ENCODE measurements at regions of chr10 and their contacts with region 1.

Region 1: GRCh38 chr10:94439275-94439861 is 37.0 kb downstream of the TBC1D12 start:
- DNase-seq: no peak
- H3K4me3 Mint-ChIP-seq: no peak overlapping the region
- H3K27ac Mint-ChIP-seq: no peak overlapping the region
- H3K4me1 Mint-ChIP-seq: no peaks in the 10 kb centered on the region
- H3K27me3 Mint-ChIP-seq: peaks cover 8% of the 10 kb centered on the region

Region 2: GRCh38 chr10:94279835-94280709 is 159.3 kb before region 1 on chr10:
- CTCF ChIA-PET with region 1: interaction called, 31 read pairs
- POLR2A ChIA-PET with region 1: no interaction called
- intact Hi-C with region 1: loop called (anchors 1 kb)
- DNase-seq: peak; percentile 66
- H3K4me3 Mint-ChIP-seq: no peak overlapping the region
- H3K27ac Mint-ChIP-seq: no peak overlapping the region
- H3K4me1 Mint-ChIP-seq: peaks cover 3% of the 10 kb centered on the region
- H3K27me3 Mint-ChIP-seq: peaks cover 15% of the 10 kb centered on the region

Measured in activated CD4-positive, alpha-beta memory T cell treated with anti-CD3 and anti-CD28 coated beads for 36 hours (primary cell).